ENCODE measurements at regions of chr1 and their contacts with region 1.

Region 1: DNA sequence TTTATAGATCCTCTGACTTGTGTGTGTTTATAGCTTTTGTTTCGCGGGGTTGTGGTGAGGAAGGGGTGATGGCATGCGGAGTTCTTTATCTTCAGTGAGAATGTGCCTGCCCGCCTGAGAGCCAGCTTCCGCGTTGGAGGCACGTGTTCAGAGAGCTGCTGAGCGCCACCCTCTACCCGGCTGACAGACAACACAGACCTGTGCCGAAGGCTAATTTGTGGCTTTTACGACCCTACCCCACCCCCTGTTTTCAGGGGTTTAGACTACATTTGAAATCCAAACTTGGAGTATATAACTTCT is 14.4 kb upstream of the CD101 start:
- DNase-seq: peak; percentile 57 to 87 (median 73)
- ATAC-seq: peak; percentile 93
- H3K4me3 ChIP-seq: peak overlapping the region; percentile 54
- H3K4me3 Mint-ChIP-seq: peak overlapping the region; percentile 78
- H3K27ac ChIP-seq: peak overlapping the region; percentile 42 to 72
- H3K27ac Mint-ChIP-seq: peak overlapping the region; percentile 91
- H3K4me1 ChIP-seq: peaks cover 49% of the 10 kb centered on the region
- H3K4me1 Mint-ChIP-seq: peaks cover 70% of the 10 kb centered on the region
- H3K27me3 ChIP-seq: no peaks in the 10 kb centered on the region
- H3K27me3 Mint-ChIP-seq: no peaks in the 10 kb centered on the region
- CTCF ChIP-seq: no peak

Region 2: DNA sequence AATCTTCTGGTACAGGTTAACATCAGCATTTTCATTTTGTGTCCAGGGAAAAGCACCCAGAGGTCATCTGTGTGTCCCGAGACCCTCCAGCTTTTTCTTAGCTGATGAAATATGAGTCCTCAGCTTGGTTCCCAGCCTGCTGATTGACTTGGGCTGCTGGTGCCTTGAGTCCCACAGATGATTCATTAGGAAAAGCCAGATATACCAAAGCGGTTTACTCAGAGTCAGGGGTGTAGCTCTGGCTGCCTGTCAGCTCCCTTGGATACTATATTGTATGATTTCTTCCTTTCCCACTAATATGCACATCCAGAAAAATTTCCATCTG is 919.7 kb before region 1 on chr1:
- CTCF ChIA-PET with region 1: no interaction called
- POLR2A ChIA-PET with region 1: no interaction called
- intact Hi-C with region 1: no loop called
- DNase-seq: no peak
- ATAC-seq: no peak
- H3K4me3 ChIP-seq: no peak overlapping the region
- H3K4me3 Mint-ChIP-seq: no peak overlapping the region
- H3K27ac ChIP-seq: no peak overlapping the region
- H3K27ac Mint-ChIP-seq: no peak overlapping the region
- H3K4me1 ChIP-seq: no peaks in the 10 kb centered on the region
- H3K4me1 Mint-ChIP-seq: no peaks in the 10 kb centered on the region
- H3K27me3 ChIP-seq: peaks cover 0 to 5% of the 10 kb centered on the region in 2 experiments
- H3K27me3 Mint-ChIP-seq: peaks cover 21% of the 10 kb centered on the region
- CTCF ChIP-seq: no peak

Region 3: GRCh38 chr1:116605315-116605714 is 381.9 kb before region 1 on chr1:
- CTCF ChIA-PET with region 1: no interaction called
- POLR2A ChIA-PET with region 1: no interaction called
- intact Hi-C with region 1: no loop called
- DNase-seq: no peak
- ATAC-seq: no peak
- H3K4me3 ChIP-seq: no peak overlapping the region
- H3K4me3 Mint-ChIP-seq: no peak overlapping the region
- H3K27ac ChIP-seq: no peak overlapping the region
- H3K27ac Mint-ChIP-seq: no peak overlapping the region
- H3K4me1 ChIP-seq: peaks cover 2% of the 10 kb centered on the region
- H3K4me1 Mint-ChIP-seq: peaks cover 10% of the 10 kb centered on the region
- H3K27me3 ChIP-seq: no peaks in the 10 kb centered on the region
- H3K27me3 Mint-ChIP-seq: no peaks in the 10 kb centered on the region
- CTCF ChIP-seq: no peak

Region 4: GRCh38 chr1:116724765-116725375 is 262.3 kb before region 1 on chr1:
- CTCF ChIA-PET with region 1: interaction called, 5 read pairs
- POLR2A ChIA-PET with region 1: no interaction called
- intact Hi-C with region 1: loop called in 1 of 2 experiments (anchors 5 kb)
- DNase-seq: peak; percentile 56 to 90 (median 72)
- ATAC-seq: no peak
- H3K4me3 ChIP-seq: no peak overlapping the region
- H3K4me3 Mint-ChIP-seq: no peak overlapping the region
- H3K27ac ChIP-seq: no peak overlapping the region
- H3K27ac Mint-ChIP-seq: no peak overlapping the region
- H3K4me1 ChIP-seq: peaks cover 3% of the 10 kb centered on the region
- H3K4me1 Mint-ChIP-seq: peaks cover 22% of the 10 kb centered on the region
- H3K27me3 ChIP-seq: no peaks in the 10 kb centered on the region
- H3K27me3 Mint-ChIP-seq: no peaks in the 10 kb centered on the region
- CTCF ChIP-seq: peak; percentile 97

Region 5: GRCh38 chr1:116754198-116754977 is 232.8 kb before region 1 on chr1 and contains the start of gene CD2:
- CTCF ChIA-PET with region 1: no interaction called
- POLR2A ChIA-PET with region 1: interaction called, 13 read pairs
- intact Hi-C with region 1: loop called in 1 of 2 experiments (anchors 5 kb)
- DNase-seq: peak in 11 of 14 experiments; percentile 47 to 82 (median 60)
- ATAC-seq: peak; percentile 86
- H3K4me3 ChIP-seq: peak within 1 kb of the TSS; percentile 78
- H3K4me3 Mint-ChIP-seq: peak within 1 kb of the TSS; percentile 97
- H3K27ac ChIP-seq: peak within 1 kb of the TSS; percentile 81 to 82
- H3K27ac Mint-ChIP-seq: peak within 1 kb of the TSS; percentile 99
- H3K4me1 ChIP-seq: peaks cover 19% of the 10 kb centered on the region
- H3K4me1 Mint-ChIP-seq: peaks cover 59% of the 10 kb centered on the region
- H3K27me3 ChIP-seq: no peaks in the 10 kb centered on the region
- H3K27me3 Mint-ChIP-seq: no peaks in the 10 kb centered on the region
- CTCF ChIP-seq: peak; percentile 13
- total RNA-seq, gene CD2: 150 to 151 TPM

Region 6: DNA sequence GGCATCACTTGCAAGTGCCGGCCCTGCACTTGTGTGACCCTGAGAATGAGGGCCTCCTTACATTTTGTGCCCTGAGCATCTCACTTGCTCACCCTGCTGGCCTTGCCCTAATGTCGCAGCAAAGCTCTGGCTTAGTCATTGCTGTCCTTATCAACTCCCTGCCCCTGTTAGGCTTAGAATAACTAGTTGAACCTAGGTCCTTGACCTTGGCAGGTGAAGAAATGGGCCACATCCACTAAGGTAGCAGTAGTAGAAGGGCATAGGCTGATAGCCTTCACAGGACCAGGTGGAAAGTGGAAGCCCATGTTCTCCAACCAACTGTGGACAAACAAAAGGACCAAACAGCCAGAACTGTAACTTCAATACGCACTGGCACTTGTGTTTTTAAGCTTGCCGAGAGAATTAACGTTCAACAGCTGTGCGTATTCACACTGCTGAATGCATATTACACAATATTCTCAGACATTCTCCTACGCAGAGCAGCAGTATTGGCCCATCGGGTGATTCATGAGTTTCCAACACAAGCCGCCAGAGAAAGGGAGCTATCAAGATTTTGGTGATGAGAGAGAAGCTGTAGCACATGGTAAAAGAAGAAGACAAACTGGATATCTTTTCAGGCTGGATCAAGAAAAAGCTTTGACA is 105.2 kb before region 1 on chr1:
- CTCF ChIA-PET with region 1: no interaction called
- POLR2A ChIA-PET with region 1: interaction called, 31 read pairs
- intact Hi-C with region 1: loop called in 1 of 2 experiments (anchors 5 kb)
- DNase-seq: peak in 6 of 14 experiments; percentile 9 to 55 (median 31)
- ATAC-seq: no peak
- H3K4me3 ChIP-seq: no peak overlapping the region
- H3K4me3 Mint-ChIP-seq: no peak overlapping the region
- H3K27ac ChIP-seq: no peak overlapping the region
- H3K27ac Mint-ChIP-seq: no peak overlapping the region
- H3K4me1 ChIP-seq: peaks cover 23% of the 10 kb centered on the region
- H3K4me1 Mint-ChIP-seq: peaks cover 3% of the 10 kb centered on the region
- H3K27me3 ChIP-seq: no peaks in the 10 kb centered on the region
- H3K27me3 Mint-ChIP-seq: no peaks in the 10 kb centered on the region
- CTCF ChIP-seq: peak; percentile 31

Region 7: GRCh38 chr1:116962987-116963639 is 24.1 kb before region 1 on chr1:
- CTCF ChIA-PET with region 1: no interaction called
- POLR2A ChIA-PET with region 1: interaction called, 16 read pairs
- intact Hi-C with region 1: no loop called
- DNase-seq: peak in 4 of 14 experiments; percentile 19 to 52 (median 36)
- ATAC-seq: peak; percentile 62
- H3K4me3 ChIP-seq: no peak overlapping the region
- H3K4me3 Mint-ChIP-seq: no peak overlapping the region
- H3K27ac ChIP-seq: no peak overlapping the region
- H3K27ac Mint-ChIP-seq: no peak overlapping the region
- H3K4me1 ChIP-seq: peaks cover 17% of the 10 kb centered on the region
- H3K4me1 Mint-ChIP-seq: peaks cover 5% of the 10 kb centered on the region
- H3K27me3 ChIP-seq: no peaks in the 10 kb centered on the region
- H3K27me3 Mint-ChIP-seq: no peaks in the 10 kb centered on the region
- CTCF ChIP-seq: no peak

Region 8: DNA sequence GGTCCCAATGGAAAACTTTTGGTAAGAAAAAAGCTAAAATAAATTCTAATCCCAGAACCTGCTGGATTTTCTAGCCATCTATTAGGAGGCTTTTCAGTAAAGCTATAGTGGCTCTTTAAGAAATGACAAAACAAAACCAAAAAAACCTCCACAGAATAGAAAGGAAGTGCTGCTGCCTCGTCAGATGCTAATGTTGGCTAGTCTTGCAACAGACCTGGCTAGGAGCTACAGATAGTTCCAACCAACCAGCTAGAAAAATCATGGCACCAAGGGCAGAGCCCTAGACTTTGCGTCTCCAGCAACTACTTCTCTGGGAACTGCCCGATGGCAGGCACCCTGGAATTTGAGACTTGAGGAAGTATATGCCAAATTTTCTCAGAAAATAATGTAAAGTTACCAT is 21.9 kb after region 1 on chr1:
- CTCF ChIA-PET with region 1: no interaction called
- POLR2A ChIA-PET with region 1: interaction called, 20 read pairs
- intact Hi-C with region 1: no loop called
- DNase-seq: peak in 3 of 14 experiments; percentile 43 to 59 (median 45)
- ATAC-seq: peak; percentile 54
- H3K4me3 ChIP-seq: no peak overlapping the region
- H3K4me3 Mint-ChIP-seq: peak overlapping the region; percentile 62
- H3K27ac ChIP-seq: no peak overlapping the region
- H3K27ac Mint-ChIP-seq: peak overlapping the region; percentile 93
- H3K4me1 ChIP-seq: peaks cover 38% of the 10 kb centered on the region
- H3K4me1 Mint-ChIP-seq: peaks cover 74% of the 10 kb centered on the region
- H3K27me3 ChIP-seq: no peaks in the 10 kb centered on the region
- H3K27me3 Mint-ChIP-seq: no peaks in the 10 kb centered on the region
- CTCF ChIP-seq: no peak

Region 9: GRCh38 chr1:117142200-117142599 is 155.0 kb after region 1 on chr1:
- CTCF ChIA-PET with region 1: no interaction called
- POLR2A ChIA-PET with region 1: no interaction called
- intact Hi-C with region 1: no loop called
- DNase-seq: no peak
- ATAC-seq: no peak
- H3K4me3 ChIP-seq: no peak overlapping the region
- H3K4me3 Mint-ChIP-seq: no peak overlapping the region
- H3K27ac ChIP-seq: no peak overlapping the region
- H3K27ac Mint-ChIP-seq: no peak overlapping the region
- H3K4me1 ChIP-seq: no peaks in the 10 kb centered on the region
- H3K4me1 Mint-ChIP-seq: no peaks in the 10 kb centered on the region
- H3K27me3 ChIP-seq: no peaks in the 10 kb centered on the region
- H3K27me3 Mint-ChIP-seq: peaks cover 12% of the 10 kb centered on the region
- CTCF ChIP-seq: no peak

Region 10: DNA sequence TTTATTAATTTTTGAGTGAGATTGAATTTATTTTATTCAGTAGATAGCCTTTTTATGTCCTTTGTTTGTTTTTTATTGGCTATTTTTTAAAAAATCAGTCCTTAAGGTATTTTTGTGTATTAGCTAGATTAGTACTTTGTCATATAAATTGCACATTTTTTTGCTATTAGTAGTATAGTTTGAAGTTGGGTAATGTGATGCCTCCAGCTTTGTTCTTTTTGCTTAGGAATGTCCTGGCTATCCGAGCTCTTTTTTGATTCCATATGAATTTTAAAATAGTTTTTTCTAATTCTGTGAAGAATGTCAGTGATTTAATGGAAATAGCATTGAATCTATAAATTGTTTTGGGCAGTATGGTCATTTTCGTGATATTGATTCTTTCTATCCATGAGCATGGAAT is 460.5 kb after region 1 on chr1:
- CTCF ChIA-PET with region 1: no interaction called
- POLR2A ChIA-PET with region 1: no interaction called
- intact Hi-C with region 1: no loop called
- DNase-seq: no peak
- ATAC-seq: no peak
- H3K4me3 ChIP-seq: no peak overlapping the region
- H3K4me3 Mint-ChIP-seq: no peak overlapping the region
- H3K27ac ChIP-seq: no peak overlapping the region
- H3K27ac Mint-ChIP-seq: no peak overlapping the region
- H3K4me1 ChIP-seq: no peaks in the 10 kb centered on the region
- H3K4me1 Mint-ChIP-seq: no peaks in the 10 kb centered on the region
- H3K27me3 ChIP-seq: no peaks in the 10 kb centered on the region
- H3K27me3 Mint-ChIP-seq: no peaks in the 10 kb centered on the region
- CTCF ChIP-seq: no peak

Measured in CD4-positive, alpha-beta T cell (primary cell).